PC-9 (cell line): ENCODE measurements at regions of chr10 and their contacts with region 1.

Region 1: GRCh38 chr10:5958077-5958476 is 19.3 kb downstream of the IL15RA start:
- DNase-seq: no peak
- H3K4me3 ChIP-seq: no peak overlapping the region
- H3K27ac ChIP-seq: peak overlapping the region; percentile 78
- H3K4me1 ChIP-seq: peaks cover 20% of the 10 kb centered on the region
- H3K27me3 ChIP-seq: no peaks in the 10 kb centered on the region
- CTCF ChIP-seq: no peak

Region 2: DNA sequence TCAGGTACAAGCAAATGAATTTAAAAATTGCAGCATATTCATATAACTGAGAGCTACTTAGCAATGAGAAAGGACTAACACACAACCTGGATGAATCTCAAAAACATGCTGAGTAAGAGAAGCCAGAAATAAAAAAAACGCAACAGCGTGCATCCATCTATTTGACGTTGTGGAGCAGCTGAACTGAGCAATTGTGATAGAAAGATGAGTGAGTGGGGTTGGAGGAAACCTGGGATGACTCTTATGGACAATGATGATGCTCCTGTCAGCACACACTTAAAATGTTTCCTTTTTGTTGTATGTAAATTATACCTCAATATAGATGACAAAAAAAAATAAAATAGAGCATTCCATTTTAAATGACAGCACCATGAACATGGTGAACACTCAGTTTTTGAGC is 1168.0 kb before region 1 on chr10:
- CTCF ChIA-PET with region 1: no interaction called
- POLR2A ChIA-PET with region 1: interaction called, 22 read pairs
- intact Hi-C with region 1: no loop called
- DNase-seq: no peak
- H3K4me3 ChIP-seq: no peak overlapping the region
- H3K27ac ChIP-seq: no peak overlapping the region
- H3K4me1 ChIP-seq: no peaks in the 10 kb centered on the region
- H3K27me3 ChIP-seq: no peaks in the 10 kb centered on the region
- CTCF ChIP-seq: no peak

Region 3: GRCh38 chr10:5812283-5813031 is 145.6 kb before region 1 on chr10:
- CTCF ChIA-PET with region 1: no interaction called
- POLR2A ChIA-PET with region 1: no interaction called
- intact Hi-C with region 1: no loop called
- DNase-seq: peak in 1 of 2 experiments; percentile 35
- H3K4me3 ChIP-seq: peak overlapping the region; percentile 99
- H3K27ac ChIP-seq: peak overlapping the region; percentile 94; the same call in 1 of the 2 replicates
- H3K4me1 ChIP-seq: peaks cover 25% of the 10 kb centered on the region
- H3K27me3 ChIP-seq: no peaks in the 10 kb centered on the region
- CTCF ChIP-seq: no peak

Region 4: GRCh38 chr10:5862360-5862961 is 95.6 kb before region 1 on chr10:
- CTCF ChIA-PET with region 1: interaction called, 15 read pairs
- POLR2A ChIA-PET with region 1: no interaction called
- intact Hi-C with region 1: no loop called
- DNase-seq: no peak
- H3K4me3 ChIP-seq: no peak overlapping the region
- H3K27ac ChIP-seq: peak overlapping the region; percentile 39; the same call in 1 of the 2 replicates
- H3K4me1 ChIP-seq: peaks cover 21% of the 10 kb centered on the region
- H3K27me3 ChIP-seq: no peaks in the 10 kb centered on the region
- CTCF ChIP-seq: no peak

Region 5: GRCh38 chr10:5904227-5904626 is 53.9 kb before region 1 on chr10:
- CTCF ChIA-PET with region 1: interaction called, 4 read pairs
- POLR2A ChIA-PET with region 1: interaction called, 15 read pairs
- intact Hi-C with region 1: no loop called
- DNase-seq: no peak
- H3K4me3 ChIP-seq: no peak overlapping the region
- H3K27ac ChIP-seq: no peak overlapping the region
- H3K4me1 ChIP-seq: no peaks in the 10 kb centered on the region
- H3K27me3 ChIP-seq: no peaks in the 10 kb centered on the region
- CTCF ChIP-seq: no peak

Region 6: DNA sequence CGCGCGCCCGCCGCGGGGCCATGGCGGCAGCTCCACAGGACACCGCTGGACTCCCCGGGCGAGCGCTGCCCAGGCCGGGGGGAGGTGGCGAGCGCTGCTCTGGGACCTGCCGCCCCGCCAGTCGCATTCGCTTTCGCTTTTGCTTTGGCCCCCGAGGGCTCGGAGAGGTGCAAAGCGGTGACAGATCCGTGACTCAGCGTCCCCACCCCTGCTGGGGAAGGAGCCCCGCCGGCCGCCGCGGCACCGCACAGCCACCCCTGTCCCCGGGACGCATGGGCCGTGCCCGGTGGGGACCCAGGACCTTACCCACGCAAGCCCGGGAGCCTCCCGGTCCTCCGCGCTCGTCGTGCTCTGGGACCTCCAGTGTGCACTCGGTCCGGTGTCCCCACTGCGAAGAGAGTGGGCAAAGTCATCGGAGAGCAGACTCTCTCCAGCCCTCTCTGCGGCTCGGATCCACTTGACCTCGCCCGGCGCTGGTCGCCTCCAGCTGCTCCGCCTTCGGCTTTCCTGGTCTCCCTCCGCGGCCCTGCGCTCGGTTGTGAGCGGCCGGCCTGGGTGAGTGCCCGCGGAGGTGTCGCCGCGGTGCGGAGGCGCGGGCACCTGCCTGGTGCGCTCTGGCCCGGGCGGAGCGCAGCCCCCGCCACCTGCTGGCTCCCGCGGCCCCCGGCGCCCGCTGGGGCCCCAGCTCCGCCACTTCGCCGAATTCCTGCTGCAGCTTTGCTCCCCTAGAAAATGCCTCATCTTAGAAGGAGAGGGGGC is 19.6 kb after region 1 on chr10 and contains the start of gene IL15RA:
- CTCF ChIA-PET with region 1: no interaction called
- POLR2A ChIA-PET with region 1: no interaction called
- intact Hi-C with region 1: loop called (anchors 2 kb)
- DNase-seq: peak; percentile 70 to 87
- H3K4me3 ChIP-seq: peak within 1 kb of the TSS; percentile 70
- H3K27ac ChIP-seq: peak within 1 kb of the TSS; percentile 6; the same call in 1 of the 2 replicates
- H3K4me1 ChIP-seq: no peaks in the 10 kb centered on the region
- H3K27me3 ChIP-seq: no peaks in the 10 kb centered on the region
- CTCF ChIP-seq: no peak
- total RNA-seq, gene IL15RA: 15.5 TPM in 2 replicates